ENCODE measurements at regions of chr5 and their contacts with region 1.

Region 1: GRCh38 chr5:132829742-132830435 is 558 bp downstream of the SHROOM1 start:
- DNase-seq: peak; percentile 92
- H3K4me3 Mint-ChIP-seq: peak overlapping the region; percentile 84
- H3K27ac Mint-ChIP-seq: peak overlapping the region; percentile 84
- H3K4me1 Mint-ChIP-seq: peaks cover 19% of the 10 kb centered on the region
- H3K27me3 Mint-ChIP-seq: peaks cover 52% of the 10 kb centered on the region

Region 2: DNA sequence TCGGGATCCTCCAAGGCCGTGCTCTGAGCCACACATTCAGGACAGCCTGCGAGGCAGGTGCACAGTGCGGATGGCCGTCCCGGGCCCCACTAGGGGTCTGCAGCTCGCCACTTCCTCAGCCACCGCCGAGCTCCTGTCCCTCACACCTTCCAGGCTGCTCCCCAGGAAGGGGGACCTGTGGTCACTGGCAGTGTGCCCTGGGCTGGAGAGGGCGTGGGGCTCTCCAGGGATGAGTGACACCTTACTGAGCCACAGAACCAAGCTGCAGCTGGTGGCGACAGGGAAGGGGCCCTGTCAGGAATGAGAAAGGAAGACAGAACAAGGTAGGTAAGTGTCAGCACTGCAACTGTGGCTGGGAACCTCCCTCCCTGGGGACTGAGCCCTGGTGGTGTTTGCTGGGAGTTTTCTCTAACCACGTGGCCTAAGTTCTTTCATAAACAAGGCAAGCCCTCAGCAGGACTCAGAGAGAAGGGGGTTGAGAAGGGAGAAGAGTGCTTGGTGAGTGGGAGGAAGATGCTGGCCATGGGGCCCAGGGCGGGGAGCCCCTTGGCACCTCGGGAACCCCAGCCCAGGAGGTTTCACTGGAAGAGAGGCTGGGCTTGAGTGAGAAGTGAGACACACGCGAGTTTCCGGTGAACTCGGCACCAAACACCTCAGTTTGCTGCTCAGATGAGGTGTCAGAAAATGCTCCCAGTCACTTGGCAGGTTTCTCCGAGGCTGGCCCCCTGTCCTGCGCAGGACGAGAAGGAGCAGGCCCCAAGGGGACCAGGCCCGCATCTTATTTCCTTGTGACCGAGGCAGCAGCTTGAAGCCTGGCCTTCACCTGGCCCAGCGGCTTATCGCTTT is 166.7 kb before region 1 on chr5:
- intact Hi-C with region 1: loop called (anchors 5 kb)
- DNase-seq: peak; percentile 81
- H3K4me3 Mint-ChIP-seq: peak overlapping the region; percentile 67
- H3K27ac Mint-ChIP-seq: peak overlapping the region; percentile 85
- H3K4me1 Mint-ChIP-seq: peaks cover 66% of the 10 kb centered on the region
- H3K27me3 Mint-ChIP-seq: no peaks in the 10 kb centered on the region

Region 3: DNA sequence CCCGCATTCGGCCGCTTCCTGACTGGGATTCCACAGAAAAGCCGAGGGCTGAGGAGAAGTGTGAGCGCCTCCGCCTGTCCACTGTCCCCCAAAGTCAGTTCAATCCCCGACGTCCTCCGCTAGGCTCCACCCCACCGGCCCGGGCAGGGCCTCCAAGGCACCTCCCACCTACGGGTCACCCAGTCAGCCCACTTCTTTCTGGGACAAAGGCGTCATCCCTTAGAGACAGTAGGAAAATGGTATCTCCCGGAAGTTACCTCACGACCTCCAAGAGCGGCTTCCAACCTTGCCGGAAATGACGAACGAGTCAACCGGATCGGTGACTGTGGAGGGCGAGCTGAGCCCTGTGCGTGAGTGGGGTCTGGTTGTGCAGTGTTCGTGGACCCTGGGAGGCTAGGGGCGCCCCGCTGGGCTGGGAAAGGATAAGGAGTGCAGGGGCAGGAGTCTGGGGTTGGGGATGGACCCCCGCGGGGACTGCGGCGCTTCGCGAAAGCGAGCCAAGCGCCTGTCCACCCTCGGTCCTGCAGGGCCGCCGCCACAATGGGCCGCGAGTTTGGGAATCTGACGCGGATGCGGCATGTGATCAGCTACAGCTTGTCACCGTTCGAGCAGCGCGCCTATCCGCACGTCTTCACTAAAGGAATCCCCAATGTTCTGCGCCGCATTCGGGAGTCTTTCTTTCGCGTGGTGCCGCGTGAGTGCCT is 36.6 kb after region 1 on chr5 and contains the starts of genes GDF9 and UQCRQ:
- intact Hi-C with region 1: loop called (anchors 1 kb)
- DNase-seq: peak; percentile 98
- H3K4me3 Mint-ChIP-seq: peak within 1 kb of the TSS; percentile 95
- H3K27ac Mint-ChIP-seq: peak within 1 kb of the TSS; percentile 99
- H3K4me1 Mint-ChIP-seq: peaks cover 24% of the 10 kb centered on the region
- H3K27me3 Mint-ChIP-seq: peaks cover 9% of the 10 kb centered on the region
- total RNA-seq, gene GDF9: 0.30 and 0.45 TPM in 2 replicates
- total RNA-seq, gene UQCRQ: 454 and 464 TPM in 2 replicates

Region 4: DNA sequence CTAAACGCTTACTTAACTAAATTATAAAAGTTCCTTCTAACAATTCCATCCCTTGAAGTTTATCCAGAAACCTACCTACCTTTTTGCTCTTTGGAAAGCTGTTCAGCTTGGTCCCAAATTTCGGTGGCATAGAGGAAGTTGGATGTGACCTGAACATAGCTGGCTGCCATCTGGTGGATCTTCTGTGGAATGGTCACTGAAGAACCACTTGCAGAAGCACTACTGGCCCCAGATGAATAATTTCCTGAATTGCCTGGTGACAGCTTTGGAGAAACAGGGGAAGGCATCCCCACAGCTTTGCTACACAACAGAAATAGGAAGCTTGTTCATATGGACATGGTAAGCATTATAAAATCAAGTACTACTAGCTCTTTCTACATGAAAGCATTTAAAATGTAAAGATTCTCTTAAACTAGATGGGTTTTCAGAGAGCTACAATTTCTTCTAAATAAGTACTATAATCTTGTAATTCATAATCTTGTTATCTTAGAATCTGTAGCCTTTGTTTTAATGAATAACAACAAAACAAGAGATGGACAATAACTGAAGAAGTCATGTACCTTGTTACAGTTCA is 53.5 kb after region 1 on chr5:
- intact Hi-C with region 1: loop called (anchors 1 kb)
- DNase-seq: peak; percentile 75
- H3K4me3 Mint-ChIP-seq: no peak overlapping the region
- H3K27ac Mint-ChIP-seq: no peak overlapping the region
- H3K4me1 Mint-ChIP-seq: peaks cover 8% of the 10 kb centered on the region
- H3K27me3 Mint-ChIP-seq: no peaks in the 10 kb centered on the region

Measured in activated CD4-positive, alpha-beta T cell treated with anti-CD3 and anti-CD28 coated beads, Interleukin-2, amount 10 ng/mL, durations not matched to agents 24 days and 14 days (primary cell).